ENCODE measurements at regions of chr14 and their contacts with region 1.

Region 1: DNA sequence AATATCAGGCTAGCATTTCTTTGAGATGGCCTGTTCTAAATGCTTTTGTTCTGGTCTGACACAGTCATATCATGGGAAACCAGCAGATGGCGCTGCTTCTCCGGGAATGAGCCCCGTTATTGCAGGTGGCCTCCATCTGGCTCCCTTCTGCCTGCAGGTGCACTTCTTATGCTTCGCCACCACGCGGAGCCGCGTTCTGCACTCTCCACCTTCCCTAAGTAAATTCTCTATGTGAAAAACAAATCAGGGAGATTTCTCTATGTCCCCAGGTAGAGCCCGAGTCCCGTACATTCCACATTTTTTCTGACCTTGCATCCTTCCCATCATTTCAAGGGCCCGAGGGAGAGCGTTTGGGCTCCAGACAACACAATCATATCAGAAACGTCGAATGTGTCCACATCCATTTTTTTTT is 26.2 kb downstream of the GLRX5 start:
- DNase-seq: peak; percentile 61 to 86 (median 80)
- ATAC-seq: peak; percentile 96
- H3K4me3 ChIP-seq: no peak overlapping the region
- H3K27ac ChIP-seq: no peak overlapping the region
- H3K4me1 ChIP-seq: no peaks in the 10 kb centered on the region
- H3K27me3 ChIP-seq: no peaks in the 10 kb centered on the region
- CTCF ChIP-seq: peak; percentile 87 to 95

Region 2: GRCh38 chr14:95774265-95775160 is 213.5 kb after region 1 on chr14:
- intact Hi-C with region 1: loop called in 1 of 2 experiments (anchors 10 kb)
- DNase-seq: peak in 1 of 4 donors; percentile 37
- ATAC-seq: peak; percentile 76
- H3K4me3 ChIP-seq: no peak overlapping the region
- H3K27ac ChIP-seq: no peak overlapping the region
- H3K4me1 ChIP-seq: no peaks in the 10 kb centered on the region
- H3K27me3 ChIP-seq: peaks cover 0 to 12% of the 10 kb centered on the region in 2 donors
- CTCF ChIP-seq: peak; percentile 84 to 85

Region 3: GRCh38 chr14:95998656-95999055 is 437.6 kb after region 1 on chr14:
- intact Hi-C with region 1: loop called in 1 of 2 experiments (anchors 5 kb)
- DNase-seq: peak in 1 of 4 donors; percentile 22
- ATAC-seq: peak; percentile 84
- H3K4me3 ChIP-seq: no peak overlapping the region
- H3K27ac ChIP-seq: no peak overlapping the region
- H3K4me1 ChIP-seq: no peaks in the 10 kb centered on the region
- H3K27me3 ChIP-seq: peaks cover 10 to 43% of the 10 kb centered on the region in 2 donors
- CTCF ChIP-seq: peak; percentile 16 to 36

Measured in left lung (tissue), 14 donors.